ENCODE measurements at regions of chr21 and their contacts with region 1.

Region 1: DNA sequence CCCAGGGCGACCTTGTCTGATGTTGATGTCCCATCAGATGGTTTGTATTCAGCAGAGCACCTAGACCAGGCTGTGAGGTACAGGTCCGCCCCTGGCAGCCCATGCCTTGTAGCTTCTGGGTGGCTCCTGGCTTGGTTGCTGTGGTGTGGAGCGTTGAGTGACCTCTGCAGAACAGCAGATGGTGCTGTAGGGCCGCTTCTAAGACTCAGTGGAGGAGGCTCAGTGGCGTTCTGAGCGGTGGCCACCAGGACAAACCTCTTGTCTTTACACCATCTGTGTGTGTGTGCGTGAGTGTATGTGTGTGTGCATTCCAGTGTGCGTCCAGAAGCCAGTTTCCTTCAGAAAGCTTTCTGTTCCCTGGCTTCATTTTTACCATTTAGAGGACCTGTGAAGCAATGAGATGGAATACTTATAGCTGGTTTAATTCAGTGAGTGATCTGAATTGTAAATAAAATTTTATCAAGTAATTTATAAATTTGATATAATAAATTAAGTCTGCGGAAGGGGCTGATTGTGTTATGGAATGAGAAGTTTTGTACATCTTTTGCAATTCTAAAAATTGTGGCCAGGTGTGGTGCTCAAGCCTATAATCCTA is 66.1 kb downstream of the ADARB1 start:
- DNase-seq: peak; percentile 82

Region 2: DNA sequence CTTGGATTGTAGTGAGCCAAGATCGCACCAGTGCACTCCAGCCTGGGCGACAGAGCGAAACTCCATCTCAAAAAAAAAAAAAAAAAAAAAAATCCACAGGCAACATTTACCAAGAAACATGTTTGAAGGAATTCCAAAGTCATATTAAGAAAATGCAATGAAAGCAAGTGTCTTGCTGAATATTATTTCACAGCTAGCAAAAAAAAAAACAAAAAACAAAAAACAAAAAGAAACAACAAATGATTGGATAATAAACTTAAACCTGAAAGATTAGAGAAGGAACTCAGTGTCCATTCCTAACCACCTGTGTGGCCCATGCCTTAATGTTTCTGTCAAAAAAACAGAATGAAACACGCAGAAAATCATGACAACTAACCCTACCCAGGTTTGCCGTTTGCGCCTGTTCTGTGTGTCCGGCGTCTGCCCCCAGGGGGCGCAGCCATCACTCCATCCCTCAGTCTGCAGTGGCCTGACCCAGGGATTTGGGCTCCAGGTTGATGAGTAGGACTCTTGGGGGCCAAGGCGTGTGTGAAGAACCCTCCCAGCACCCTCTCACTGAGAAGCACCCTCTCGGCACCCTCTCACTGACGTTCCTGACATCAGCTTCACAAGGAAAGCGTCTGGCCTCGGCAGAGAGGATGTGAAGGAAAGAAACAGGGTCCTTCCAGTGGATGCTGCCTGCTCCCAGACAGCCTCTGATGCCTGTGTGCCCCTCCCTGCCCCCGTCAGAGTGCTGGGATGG is 247.7 kb before region 1 on chr21:
- intact Hi-C with region 1: loop called (anchors 5 kb)
- DNase-seq: peak; percentile 87

Region 3: DNA sequence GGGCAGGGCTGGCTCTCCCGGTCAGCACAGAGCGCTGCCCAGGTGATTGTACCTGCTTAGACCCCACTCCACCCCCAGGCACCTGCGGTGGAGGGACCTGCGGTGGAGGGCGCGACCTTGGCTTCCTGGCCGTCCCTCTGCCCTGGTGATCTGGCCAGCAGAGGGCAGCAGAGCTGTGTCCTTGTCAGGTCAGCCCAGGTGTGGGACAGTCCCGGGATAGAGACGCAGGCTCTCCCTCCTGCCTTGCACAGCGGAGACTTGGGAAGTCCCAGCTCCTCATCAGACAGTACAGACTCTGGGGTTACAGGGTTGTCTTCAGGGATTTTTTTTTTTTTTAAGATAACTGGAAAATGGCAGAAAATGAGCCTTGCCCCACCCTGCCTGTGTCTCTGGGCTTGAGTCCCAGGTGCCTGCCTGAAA is 190.7 kb before region 1 on chr21:
- intact Hi-C with region 1: loop called (anchors 1 kb)
- DNase-seq: peak; percentile 94

Region 4: GRCh38 chr21:45439161-45439872 is 298.9 kb after region 1 on chr21:
- intact Hi-C with region 1: loop called (anchors 2 kb)
- DNase-seq: peak; percentile 93

Measured in cardiac septum (tissue), 1 donor.